ENCODE measurements at regions of chr16 and their contacts with region 1.

Region 1: GRCh38 chr16:58661199-58661830 is 23.3 kb downstream of the SLC38A7 start:
- DNase-seq: peak; percentile 95
- H3K4me3 ChIP-seq: no peak overlapping the region
- H3K27ac ChIP-seq: no peak overlapping the region
- H3K4me1 ChIP-seq: peaks cover 4% of the 10 kb centered on the region; the same call in 1 of the 2 replicates
- H3K27me3 ChIP-seq: no peaks in the 10 kb centered on the region

Region 2: DNA sequence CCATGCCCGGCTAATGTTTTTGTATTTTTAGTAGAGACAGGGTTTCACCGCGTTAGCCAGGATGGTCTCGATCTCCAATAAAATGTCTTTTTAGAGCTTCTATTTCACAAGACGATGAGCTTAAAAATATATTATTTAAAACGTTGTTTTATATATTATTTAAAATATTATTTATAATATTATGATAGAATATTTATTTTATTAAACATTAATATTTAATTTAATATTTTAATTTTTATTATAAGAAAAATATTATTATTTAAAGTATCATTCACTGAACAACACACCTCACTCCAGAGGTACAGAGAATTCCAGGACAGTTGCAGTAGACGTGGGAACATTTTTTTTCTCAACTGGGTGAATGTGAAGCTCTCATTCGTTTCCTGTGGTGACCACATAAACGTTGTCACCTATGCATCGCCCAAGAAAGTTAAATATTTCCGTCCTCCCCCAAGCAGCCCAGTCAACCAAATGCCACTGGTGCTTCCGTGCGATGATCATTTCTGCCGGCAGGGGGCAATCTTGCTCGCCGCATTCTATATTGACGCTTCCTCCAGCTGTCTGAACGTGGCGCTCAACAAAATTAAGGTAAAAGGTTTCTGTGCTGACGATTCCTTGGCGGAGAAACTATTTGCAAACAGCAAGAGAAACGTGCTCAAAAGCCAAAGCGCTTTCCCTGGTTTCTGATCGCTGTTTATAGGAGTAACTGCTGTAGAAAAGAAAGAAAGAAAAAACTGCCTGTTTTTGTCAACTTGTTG is 324.8 kb before region 1 on chr16:
- in situ Hi-C with region 1: loop called (anchors 25 kb)
- DNase-seq: peak; percentile 77
- H3K4me3 ChIP-seq: peak overlapping the region; percentile 71
- H3K27ac ChIP-seq: no peak overlapping the region
- H3K4me1 ChIP-seq: no peaks in the 10 kb centered on the region
- H3K27me3 ChIP-seq: no peaks in the 10 kb centered on the region; the same call in 1 of the 2 replicates

Measured in GM23248 (cell line).